ENCODE measurements at regions of chr12 and their contacts with region 1.

Region 1: GRCh38 chr12:49567611-49568441 is at the start of gene MCRS1:
- DNase-seq: peak; percentile 79
- ATAC-seq: peak; percentile 95
- H3K4me3 ChIP-seq: peak within 1 kb of the TSS; percentile 64 to 85
- H3K27ac ChIP-seq: peak within 1 kb of the TSS; percentile 96
- H3K4me1 ChIP-seq: peaks cover 12% of the 10 kb centered on the region
- H3K27me3 ChIP-seq: no peaks in the 10 kb centered on the region
- CTCF ChIP-seq: no peak
- total RNA-seq, gene MCRS1: 88.6 TPM

Region 2: GRCh38 chr12:49358483-49359141 is 209.2 kb before region 1 on chr12:
- CTCF ChIA-PET with region 1: no interaction called
- POLR2A ChIA-PET with region 1: no interaction called
- in situ Hi-C with region 1: no loop called
- intact Hi-C with region 1: no loop called
- DNase-seq: no peak
- ATAC-seq: peak; percentile 95
- H3K4me3 ChIP-seq: no peak overlapping the region
- H3K27ac ChIP-seq: no peak overlapping the region
- H3K4me1 ChIP-seq: peaks cover 5% of the 10 kb centered on the region
- H3K27me3 ChIP-seq: no peaks in the 10 kb centered on the region
- CTCF ChIP-seq: peak; percentile 89

Region 3: DNA sequence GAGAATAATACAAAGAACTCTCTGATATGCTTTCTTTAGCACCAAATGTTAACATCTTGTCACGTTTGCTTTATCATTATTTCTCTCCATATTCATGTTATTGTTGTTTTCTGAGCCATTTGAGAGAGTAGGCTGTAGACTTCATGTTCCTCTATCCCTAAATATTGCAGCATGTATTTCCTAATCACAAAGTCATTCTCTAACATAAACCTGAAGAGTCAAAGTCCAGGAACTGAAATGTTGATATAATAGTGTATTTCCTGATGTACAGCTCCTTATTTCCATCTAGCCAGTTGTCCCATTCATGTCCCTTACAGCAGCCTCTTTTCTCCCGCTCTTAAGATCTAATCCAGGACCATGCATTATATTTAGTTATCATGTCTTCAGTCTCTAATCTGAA is 127.8 kb before region 1 on chr12:
- CTCF ChIA-PET with region 1: interaction called, 10 read pairs
- POLR2A ChIA-PET with region 1: no interaction called
- in situ Hi-C with region 1: no loop called
- intact Hi-C with region 1: no loop called
- DNase-seq: no peak
- ATAC-seq: no peak
- H3K4me3 ChIP-seq: no peak overlapping the region
- H3K27ac ChIP-seq: no peak overlapping the region
- H3K4me1 ChIP-seq: peaks cover 3% of the 10 kb centered on the region; the same call in 1 of the 2 replicates
- H3K27me3 ChIP-seq: no peaks in the 10 kb centered on the region
- CTCF ChIP-seq: no peak

Region 4: GRCh38 chr12:49838973-49839633 is 271.3 kb after region 1 on chr12:
- CTCF ChIA-PET with region 1: interaction called, 10 read pairs
- POLR2A ChIA-PET with region 1: no interaction called
- in situ Hi-C with region 1: no loop called
- intact Hi-C with region 1: no loop called
- DNase-seq: no peak
- ATAC-seq: peak; percentile 46; the same call in 1 of the 2 replicates
- H3K4me3 ChIP-seq: no peak overlapping the region
- H3K27ac ChIP-seq: no peak overlapping the region
- H3K4me1 ChIP-seq: peaks cover 16% of the 10 kb centered on the region
- H3K27me3 ChIP-seq: no peaks in the 10 kb centered on the region
- CTCF ChIP-seq: peak; percentile 83

Region 5: GRCh38 chr12:50101663-50102062 is 533.8 kb after region 1 on chr12:
- CTCF ChIA-PET with region 1: no interaction called
- POLR2A ChIA-PET with region 1: no interaction called
- in situ Hi-C with region 1: no loop called
- intact Hi-C with region 1: no loop called
- DNase-seq: no peak
- ATAC-seq: peak; percentile 36; the same call in 1 of the 2 replicates
- H3K4me3 ChIP-seq: no peak overlapping the region
- H3K27ac ChIP-seq: no peak overlapping the region
- H3K4me1 ChIP-seq: peaks cover 7% of the 10 kb centered on the region; the same call in 1 of the 2 replicates
- H3K27me3 ChIP-seq: no peaks in the 10 kb centered on the region
- CTCF ChIP-seq: peak; percentile 64

Measured in Panc1 (cell line).